ENCODE measurements at regions of chr20 and their contacts with region 1.

Region 1: DNA sequence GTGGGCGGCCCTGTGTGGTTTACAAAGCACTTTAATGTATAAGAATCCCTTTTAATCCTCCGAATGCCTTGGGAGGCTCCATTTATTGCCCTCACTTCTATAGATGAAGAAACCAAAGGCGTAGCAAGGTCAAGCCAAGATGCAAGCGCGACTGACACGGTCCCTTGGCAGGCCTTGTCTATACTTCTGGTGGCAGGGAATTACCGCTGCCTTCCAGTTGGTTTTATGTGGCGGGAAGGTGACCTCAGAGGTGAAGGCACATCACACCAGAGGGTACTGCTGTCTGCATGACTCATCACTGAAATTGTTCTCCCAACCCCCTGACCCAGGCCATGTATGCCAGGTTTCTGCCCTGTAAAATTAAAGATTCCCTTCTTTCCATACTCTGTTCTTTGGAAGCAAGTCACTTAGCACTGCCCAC is 36.1 kb upstream of the NAA20 start:
- DNase-seq: peak in 1 of 3 donors; percentile 37
- H3K4me3 ChIP-seq: no peak overlapping the region
- H3K4me3 Mint-ChIP-seq: no peak overlapping the region
- H3K27ac ChIP-seq: peak overlapping the region in 1 of 2 donors; percentile 17
- H3K27ac Mint-ChIP-seq: no peak overlapping the region
- H3K4me1 ChIP-seq: peaks cover 44 to 52% of the 10 kb centered on the region in 2 donors
- H3K4me1 Mint-ChIP-seq: peaks cover 59% of the 10 kb centered on the region
- H3K27me3 ChIP-seq: no peaks in the 10 kb centered on the region
- H3K27me3 Mint-ChIP-seq: peaks cover 0 to 5% (median 0%) of the 10 kb centered on the region in 3 donors
- CTCF ChIP-seq: no peak

Region 2: GRCh38 chr20:19838468-19838867 is 142.6 kb before region 1 on chr20:
- intact Hi-C with region 1: no loop called
- DNase-seq: no peak
- H3K4me3 ChIP-seq: no peak overlapping the region
- H3K4me3 Mint-ChIP-seq: no peak overlapping the region
- H3K27ac ChIP-seq: no peak overlapping the region
- H3K27ac Mint-ChIP-seq: no peak overlapping the region
- H3K4me1 ChIP-seq: peaks cover 5 to 13% of the 10 kb centered on the region in 2 donors
- H3K4me1 Mint-ChIP-seq: peaks cover 19% of the 10 kb centered on the region
- H3K27me3 ChIP-seq: no peaks in the 10 kb centered on the region
- H3K27me3 Mint-ChIP-seq: no peaks in the 10 kb centered on the region
- CTCF ChIP-seq: no peak

Region 3: DNA sequence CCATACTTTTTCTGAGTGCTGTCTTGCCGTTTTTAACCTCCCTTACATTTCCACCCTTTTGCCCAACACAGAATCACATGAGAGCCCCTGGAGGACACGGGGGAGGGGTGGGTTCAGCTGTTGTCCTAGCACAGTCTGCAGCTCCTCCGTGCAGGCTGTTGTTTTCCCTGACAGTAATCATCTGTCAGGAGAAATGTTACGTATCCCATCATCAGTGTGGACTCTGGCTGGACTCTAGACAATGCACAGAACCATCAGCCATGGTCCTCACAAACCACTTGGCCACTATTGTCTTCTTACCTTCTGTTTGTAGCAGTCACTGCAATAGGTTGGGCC is 130.9 kb before region 1 on chr20:
- intact Hi-C with region 1: no loop called
- DNase-seq: no peak
- H3K4me3 ChIP-seq: no peak overlapping the region
- H3K4me3 Mint-ChIP-seq: no peak overlapping the region
- H3K27ac ChIP-seq: no peak overlapping the region
- H3K27ac Mint-ChIP-seq: no peak overlapping the region
- H3K4me1 ChIP-seq: no peaks in the 10 kb centered on the region
- H3K4me1 Mint-ChIP-seq: peaks cover 7% of the 10 kb centered on the region
- H3K27me3 ChIP-seq: no peaks in the 10 kb centered on the region
- H3K27me3 Mint-ChIP-seq: peaks cover 0 to 1% (median 0%) of the 10 kb centered on the region in 3 donors
- CTCF ChIP-seq: no peak

Region 4: DNA sequence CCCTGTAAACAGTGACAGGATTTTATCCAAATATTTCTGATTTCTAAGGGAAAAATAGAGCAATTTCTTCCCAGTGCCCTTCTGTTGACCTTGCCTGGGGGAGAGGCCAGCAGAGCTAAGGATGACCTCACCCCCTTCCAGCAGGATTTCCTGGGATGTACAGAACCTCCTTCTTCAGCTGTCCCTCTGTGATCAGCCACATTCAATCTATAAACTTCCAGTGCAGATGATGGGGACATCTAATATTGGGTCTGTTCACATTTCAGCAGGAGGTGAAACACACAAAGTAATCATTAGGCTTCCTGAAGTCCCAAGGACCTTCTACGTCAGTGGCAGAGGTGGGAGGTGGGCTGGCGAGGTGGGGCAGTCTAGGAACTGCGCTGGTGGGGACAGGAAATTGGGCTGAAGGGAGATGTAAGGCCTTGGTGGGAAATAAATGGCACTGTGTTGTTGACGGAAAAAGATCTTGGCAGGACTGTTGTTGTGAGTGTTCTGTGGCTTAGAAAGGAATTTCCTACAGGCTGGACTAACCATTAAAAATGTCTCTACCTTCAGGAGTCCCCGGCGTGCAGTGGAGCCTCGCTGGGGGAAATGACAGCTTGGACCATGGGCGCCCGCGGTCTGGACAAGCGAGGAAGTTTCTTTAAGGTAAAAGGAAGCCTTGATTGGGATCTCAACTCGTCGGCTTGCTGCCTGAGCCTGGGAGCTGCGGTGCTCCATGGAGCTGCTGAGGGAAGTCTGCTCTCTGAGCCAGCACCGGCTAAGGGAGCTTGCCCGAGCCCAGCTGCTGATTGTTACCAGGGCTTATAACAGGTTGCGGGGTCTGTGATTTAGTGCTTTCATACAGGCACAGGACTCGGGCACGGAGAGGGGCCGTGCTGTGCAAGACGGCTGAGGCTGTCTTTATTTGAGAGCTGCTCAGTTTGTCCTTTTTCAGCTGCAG is 91.8 kb before region 1 on chr20:
- intact Hi-C with region 1: loop called in 1 of 2 experiments (anchors 5 kb)
- DNase-seq: no peak
- H3K4me3 ChIP-seq: peak overlapping the region in 1 of 3 experiments; percentile 21
- H3K4me3 Mint-ChIP-seq: peak overlapping the region; percentile 16 to 68
- H3K27ac ChIP-seq: no peak overlapping the region
- H3K27ac Mint-ChIP-seq: peak overlapping the region in 3 of 7 donors; percentile 6 to 61 (median 27)
- H3K4me1 ChIP-seq: peaks cover 26 to 31% of the 10 kb centered on the region in 2 donors
- H3K4me1 Mint-ChIP-seq: peaks cover 41% of the 10 kb centered on the region
- H3K27me3 ChIP-seq: no peaks in the 10 kb centered on the region
- H3K27me3 Mint-ChIP-seq: peaks cover 3 to 7% (median 5%) of the 10 kb centered on the region in 3 donors
- CTCF ChIP-seq: no peak

Measured in CD14-positive monocyte (primary cell).